OCI-LY7 (cell line): ENCODE measurements at regions of chr6 and their contacts with region 1.

Region 1: DNA sequence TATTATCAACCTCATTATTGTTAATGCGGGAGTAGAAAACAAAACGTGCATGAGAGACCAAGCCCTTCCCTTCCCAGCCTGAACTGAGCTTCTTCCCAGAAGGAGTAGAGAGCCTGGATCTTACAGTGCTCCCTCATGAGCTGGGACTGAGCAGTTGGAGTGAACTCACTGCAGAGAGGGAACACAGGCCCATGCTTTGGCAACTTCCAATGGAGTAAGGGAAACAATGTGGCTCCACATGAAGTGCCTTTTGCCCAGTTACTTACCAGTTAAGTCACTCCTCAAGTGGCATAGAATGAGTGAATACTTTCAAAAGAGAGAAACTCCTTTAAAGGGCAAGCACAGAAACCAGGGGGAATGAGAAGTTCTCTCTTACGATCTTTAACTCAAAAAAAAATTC is 12.4 kb downstream of the FHL5 start:
- DNase-seq: no peak
- H3K4me3 ChIP-seq: no peak overlapping the region
- H3K27ac ChIP-seq: no peak overlapping the region
- H3K4me1 ChIP-seq: no peaks in the 10 kb centered on the region
- CTCF ChIP-seq: no peak

Region 2: GRCh38 chr6:96499781-96500180 is 75.6 kb before region 1 on chr6:
- CTCF ChIA-PET with region 1: no interaction called
- POLR2A ChIA-PET with region 1: no interaction called
- intact Hi-C with region 1: no loop called
- DNase-seq: peak; percentile 64
- H3K4me3 ChIP-seq: no peak overlapping the region
- H3K27ac ChIP-seq: no peak overlapping the region
- H3K4me1 ChIP-seq: no peaks in the 10 kb centered on the region
- CTCF ChIP-seq: no peak

Region 3: DNA sequence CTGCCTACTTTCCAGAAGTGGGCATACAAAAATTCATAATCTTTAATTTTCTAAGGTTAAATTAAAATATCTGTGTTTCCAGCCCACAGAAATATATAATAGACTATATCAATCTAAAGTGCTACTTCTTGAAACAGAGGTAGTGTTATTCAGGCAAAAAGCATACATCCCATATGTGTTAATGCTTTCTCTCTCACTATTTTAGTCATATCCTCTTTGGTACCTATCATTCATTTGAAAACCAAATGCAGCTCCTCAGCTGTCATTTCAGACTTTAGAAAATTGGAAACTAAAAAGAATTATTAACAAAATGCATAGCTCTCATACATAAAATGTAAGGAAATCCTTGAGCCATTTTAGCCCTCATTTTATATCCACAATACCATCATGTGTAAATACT is 11.5 kb before region 1 on chr6:
- CTCF ChIA-PET with region 1: interaction called, 3 read pairs
- POLR2A ChIA-PET with region 1: interaction called, 17 read pairs
- intact Hi-C with region 1: no loop called
- DNase-seq: no peak
- H3K4me3 ChIP-seq: no peak overlapping the region
- H3K27ac ChIP-seq: no peak overlapping the region
- H3K4me1 ChIP-seq: no peaks in the 10 kb centered on the region
- CTCF ChIP-seq: no peak

Region 4: GRCh38 chr6:96683819-96684528 is 108.6 kb after region 1 on chr6:
- CTCF ChIA-PET with region 1: no interaction called
- POLR2A ChIA-PET with region 1: no interaction called
- intact Hi-C with region 1: no loop called
- DNase-seq: no peak
- H3K4me3 ChIP-seq: no peak overlapping the region
- H3K27ac ChIP-seq: no peak overlapping the region
- H3K4me1 ChIP-seq: no peaks in the 10 kb centered on the region
- CTCF ChIP-seq: no peak